Activated CD4-positive, alpha-beta memory T cell treated with anti-CD3 and anti-CD28 coated beads for 36 hours (primary cell): ENCODE measurements at regions of chr6 and their contacts with region 1.

Region 1: GRCh38 chr6:151323791-151324487 is 67.4 kb downstream of the ZBTB2 start:
- DNase-seq: peak; percentile 82
- H3K4me3 Mint-ChIP-seq: peak overlapping the region; percentile 24
- H3K27ac Mint-ChIP-seq: no peak overlapping the region
- H3K4me1 Mint-ChIP-seq: peaks cover 26% of the 10 kb centered on the region
- H3K27me3 Mint-ChIP-seq: peaks cover 44% of the 10 kb centered on the region

Region 2: GRCh38 chr6:150891888-150892485 is 432.0 kb before region 1 on chr6:
- CTCF ChIA-PET with region 1: interaction called, 98 read pairs
- POLR2A ChIA-PET with region 1: no interaction called
- intact Hi-C with region 1: loop called (anchors 2 kb)
- DNase-seq: peak; percentile 69
- H3K4me3 Mint-ChIP-seq: no peak overlapping the region
- H3K27ac Mint-ChIP-seq: no peak overlapping the region
- H3K4me1 Mint-ChIP-seq: peaks cover 29% of the 10 kb centered on the region
- H3K27me3 Mint-ChIP-seq: no peaks in the 10 kb centered on the region

Region 3: DNA sequence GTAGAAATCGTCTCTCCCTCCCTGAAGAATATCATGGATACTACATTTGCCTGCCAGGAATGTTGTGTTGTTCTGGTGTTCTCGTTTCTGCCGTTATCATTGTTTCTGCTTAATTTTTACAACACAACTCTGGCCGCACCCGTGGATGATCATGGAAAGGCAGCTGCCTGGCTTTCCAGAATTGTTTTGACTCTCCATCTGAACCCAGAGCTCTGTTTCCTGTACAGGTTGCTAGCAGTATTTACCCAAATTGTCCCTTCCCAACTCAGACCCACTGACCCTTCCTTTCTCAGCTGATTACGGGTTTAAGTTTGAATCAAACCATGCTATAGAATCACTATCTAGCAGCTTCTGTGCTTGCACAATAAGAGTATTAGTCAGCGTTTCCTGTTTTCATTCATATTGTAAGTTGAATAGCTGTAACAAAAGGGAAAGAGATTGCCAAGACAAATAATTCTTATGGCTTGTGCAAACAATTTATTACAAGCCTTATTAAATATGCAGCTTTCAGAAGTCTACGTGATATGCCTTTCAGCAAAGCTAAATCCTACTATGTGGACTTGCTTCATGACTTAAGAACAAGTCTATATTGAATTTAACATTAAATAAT is 319.4 kb before region 1 on chr6:
- CTCF ChIA-PET with region 1: interaction called, 269 read pairs
- POLR2A ChIA-PET with region 1: no interaction called
- intact Hi-C with region 1: no loop called
- DNase-seq: no peak
- H3K4me3 Mint-ChIP-seq: no peak overlapping the region
- H3K27ac Mint-ChIP-seq: peak overlapping the region; percentile 7
- H3K4me1 Mint-ChIP-seq: peaks cover 12% of the 10 kb centered on the region
- H3K27me3 Mint-ChIP-seq: no peaks in the 10 kb centered on the region

Region 4: GRCh38 chr6:151021896-151022295 is 302.0 kb before region 1 on chr6:
- CTCF ChIA-PET with region 1: interaction called, 269 read pairs
- POLR2A ChIA-PET with region 1: no interaction called
- intact Hi-C with region 1: no loop called
- DNase-seq: no peak
- H3K4me3 Mint-ChIP-seq: no peak overlapping the region
- H3K27ac Mint-ChIP-seq: no peak overlapping the region
- H3K4me1 Mint-ChIP-seq: no peaks in the 10 kb centered on the region
- H3K27me3 Mint-ChIP-seq: no peaks in the 10 kb centered on the region

Region 5: DNA sequence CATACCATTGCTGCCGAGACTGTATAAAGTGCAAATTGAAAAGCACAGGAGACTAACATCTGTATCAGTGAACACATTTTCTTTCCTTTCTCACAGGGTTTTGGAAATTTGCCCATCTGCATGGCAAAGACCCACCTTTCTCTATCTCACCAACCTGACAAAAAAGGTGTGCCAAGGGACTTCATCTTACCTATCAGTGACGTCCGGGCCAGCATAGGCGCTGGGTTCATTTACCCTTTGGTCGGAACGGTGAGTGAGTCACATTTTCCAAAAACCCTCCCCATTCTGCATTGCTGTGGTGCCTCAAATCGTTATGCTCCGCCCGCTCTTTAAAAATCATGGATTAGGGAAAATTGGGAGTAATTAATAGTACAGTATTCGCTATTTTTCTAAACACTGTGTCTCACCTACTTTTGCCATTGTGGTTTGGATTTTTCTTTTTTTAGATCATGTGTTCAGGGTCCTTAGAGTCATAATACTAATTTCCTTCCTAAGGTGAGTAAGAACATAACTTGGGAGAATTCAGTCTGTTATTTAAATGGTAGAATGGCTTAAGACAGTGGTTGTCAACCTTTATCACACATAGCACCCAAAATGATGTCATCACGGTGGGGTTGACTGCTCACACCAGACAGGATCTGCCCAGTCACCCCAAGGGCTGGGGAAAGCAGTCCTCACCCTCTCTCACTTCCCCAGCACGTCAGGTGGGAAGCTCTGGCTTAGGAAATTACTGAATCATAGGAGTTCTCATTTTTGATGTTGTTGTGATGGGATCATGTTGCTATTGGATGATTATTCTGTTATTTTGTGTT is 286.9 kb before region 1 on chr6:
- CTCF ChIA-PET with region 1: interaction called, 12 read pairs
- POLR2A ChIA-PET with region 1: no interaction called
- intact Hi-C with region 1: no loop called
- DNase-seq: peak; percentile 47
- H3K4me3 Mint-ChIP-seq: no peak overlapping the region
- H3K27ac Mint-ChIP-seq: no peak overlapping the region
- H3K4me1 Mint-ChIP-seq: peaks cover 16% of the 10 kb centered on the region
- H3K27me3 Mint-ChIP-seq: no peaks in the 10 kb centered on the region

Region 6: DNA sequence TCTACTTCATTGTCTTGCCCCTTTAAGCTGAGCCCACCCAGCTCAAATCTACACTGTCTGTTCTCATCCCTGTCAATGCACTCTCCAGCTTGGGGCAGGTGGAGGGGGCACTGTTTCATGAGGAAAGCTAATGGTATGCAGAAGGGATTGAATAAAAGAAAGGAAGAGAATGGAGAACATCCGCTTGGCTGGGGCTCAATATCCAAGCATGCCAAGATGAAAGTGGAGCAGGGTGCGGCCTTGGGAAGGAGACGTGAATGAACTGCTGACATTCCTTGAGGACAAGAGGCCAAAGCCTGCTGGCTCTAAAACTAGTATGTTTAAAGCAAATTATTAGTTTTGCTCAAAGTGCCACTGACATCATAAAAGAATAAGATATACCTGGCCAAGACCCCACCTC is 60.0 kb before region 1 on chr6:
- CTCF ChIA-PET with region 1: interaction called, 12 read pairs
- POLR2A ChIA-PET with region 1: no interaction called
- intact Hi-C with region 1: no loop called
- DNase-seq: no peak
- H3K4me3 Mint-ChIP-seq: no peak overlapping the region
- H3K27ac Mint-ChIP-seq: no peak overlapping the region
- H3K4me1 Mint-ChIP-seq: no peaks in the 10 kb centered on the region
- H3K27me3 Mint-ChIP-seq: peaks cover 8% of the 10 kb centered on the region

Region 7: DNA sequence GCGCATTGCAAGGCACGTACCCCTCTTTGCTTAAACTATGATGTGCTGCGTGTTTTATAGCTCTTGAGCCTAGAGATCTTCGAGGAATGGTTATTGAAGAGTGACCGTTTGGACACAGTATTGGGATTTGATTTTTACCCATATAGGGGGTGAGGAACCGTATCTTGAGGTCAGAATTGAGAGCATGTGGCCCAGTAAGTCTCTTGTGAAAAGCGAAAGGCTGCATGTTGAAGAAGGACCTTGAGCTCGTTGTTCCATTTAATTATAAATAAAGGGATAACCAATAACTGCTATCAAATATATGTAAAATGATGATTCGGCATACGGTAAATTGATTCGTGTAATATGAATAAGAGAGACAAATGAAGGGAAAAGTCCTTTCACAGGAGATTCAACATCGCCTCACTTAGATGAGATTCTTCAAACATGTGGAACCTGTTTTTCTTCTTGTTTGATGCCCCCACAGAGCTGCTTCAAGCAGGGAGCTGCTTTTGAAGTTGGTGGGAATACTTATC is 17.6 kb before region 1 on chr6:
- CTCF ChIA-PET with region 1: interaction called, 19 read pairs
- POLR2A ChIA-PET with region 1: no interaction called
- intact Hi-C with region 1: no loop called
- DNase-seq: no peak
- H3K4me3 Mint-ChIP-seq: no peak overlapping the region
- H3K27ac Mint-ChIP-seq: no peak overlapping the region
- H3K4me1 Mint-ChIP-seq: no peaks in the 10 kb centered on the region
- H3K27me3 Mint-ChIP-seq: peaks cover 1% of the 10 kb centered on the region